Gastrocnemius medialis (tissue), 4 donors: ENCODE measurements at regions of chr14 and their contacts with region 1.

Region 1: GRCh38 chr14:41201721-41202120 is 405.0 kb upstream of the LRFN5 start:
- DNase-seq: no peak
- ATAC-seq: no peak
- H3K4me3 ChIP-seq: no peak overlapping the region
- H3K27ac ChIP-seq: no peak overlapping the region
- H3K4me1 ChIP-seq: no peaks in the 10 kb centered on the region
- H3K27me3 ChIP-seq: no peaks in the 10 kb centered on the region
- CTCF ChIP-seq: no peak
- POLR2A ChIP-seq: no peak

Region 2: DNA sequence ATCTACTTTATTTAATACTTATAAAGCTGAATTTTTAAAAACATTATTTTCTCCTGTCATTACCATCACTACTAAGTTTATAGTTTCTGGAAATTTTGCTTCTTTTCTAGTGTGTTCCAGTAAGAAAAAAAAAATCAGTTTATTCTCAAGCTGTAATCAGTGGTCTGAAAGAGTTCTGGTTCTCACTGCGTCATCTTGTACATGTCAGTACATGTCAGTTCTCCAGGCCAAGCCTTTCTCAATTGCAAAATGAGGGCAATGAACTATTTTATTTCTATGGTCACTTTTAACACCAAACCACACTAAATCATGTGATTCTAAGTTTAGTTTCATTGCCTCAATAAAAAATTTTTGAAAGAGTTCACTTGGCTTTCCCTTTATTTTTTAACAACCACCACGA is 64.0 kb before region 1 on chr14:
- in situ Hi-C with region 1: loop called in 1 of 4 experiments (anchors 5 kb)
- intact Hi-C with region 1: no loop called
- DNase-seq: no peak
- ATAC-seq: no peak
- H3K4me3 ChIP-seq: no peak overlapping the region
- H3K27ac ChIP-seq: no peak overlapping the region
- H3K4me1 ChIP-seq: no peaks in the 10 kb centered on the region
- H3K27me3 ChIP-seq: no peaks in the 10 kb centered on the region
- CTCF ChIP-seq: no peak
- POLR2A ChIP-seq: no peak

Region 3: GRCh38 chr14:41568979-41569378 is 367.3 kb after region 1 on chr14:
- in situ Hi-C with region 1: no loop called
- intact Hi-C with region 1: no loop called
- DNase-seq: no peak
- ATAC-seq: no peak
- H3K4me3 ChIP-seq: no peak overlapping the region
- H3K27ac ChIP-seq: no peak overlapping the region
- H3K4me1 ChIP-seq: no peaks in the 10 kb centered on the region
- H3K27me3 ChIP-seq: no peaks in the 10 kb centered on the region
- CTCF ChIP-seq: no peak
- POLR2A ChIP-seq: no peak